ENCODE measurements at regions of chr1 and their contacts with region 1.

Region 1: DNA sequence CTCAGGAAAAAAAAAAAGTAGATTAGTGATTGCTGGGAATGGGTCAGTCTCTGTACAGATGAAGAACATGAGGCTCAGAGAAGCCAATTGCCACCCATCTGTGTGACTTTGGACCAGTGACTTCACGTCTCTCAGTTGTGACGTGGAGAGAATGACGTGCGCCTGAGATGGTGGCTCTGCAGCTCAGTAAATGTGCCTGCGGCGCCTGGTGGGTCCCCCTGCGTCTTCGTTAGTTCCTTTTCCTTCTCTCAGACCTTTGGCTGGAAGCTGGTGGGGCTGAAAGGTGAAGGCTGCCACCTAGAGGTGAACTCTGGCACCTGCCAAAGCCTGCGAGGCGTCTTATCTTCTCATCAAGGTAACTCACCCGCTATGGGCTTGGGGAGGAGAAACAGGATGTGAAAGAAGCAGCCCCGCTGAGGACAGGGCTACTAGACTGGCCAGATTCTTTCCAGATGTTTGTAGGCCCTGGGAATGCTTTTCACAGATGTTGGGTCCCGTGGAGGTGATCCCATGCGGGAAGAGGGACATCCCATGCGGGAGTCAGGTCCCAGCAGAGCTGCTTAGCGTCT is 8.7 kb upstream of the E2F2 start:
- DNase-seq: peak; percentile 83
- H3K4me3 ChIP-seq: no peak overlapping the region
- H3K27ac ChIP-seq: no peak overlapping the region
- H3K4me1 ChIP-seq: no peaks in the 10 kb centered on the region
- H3K27me3 ChIP-seq: no peaks in the 10 kb centered on the region
- CTCF ChIP-seq: peak; percentile 80 to 97 (median 88)
- POLR2A ChIP-seq: no peak

Region 2: GRCh38 chr1:23475134-23475628 is 64.6 kb before region 1 on chr1:
- intact Hi-C with region 1: no loop called
- DNase-seq: peak; percentile 59
- H3K4me3 ChIP-seq: no peak overlapping the region
- H3K27ac ChIP-seq: peak overlapping the region; percentile 41 to 47
- H3K4me1 ChIP-seq: peaks cover 14% of the 10 kb centered on the region
- H3K27me3 ChIP-seq: no peaks in the 10 kb centered on the region
- CTCF ChIP-seq: no peak
- POLR2A ChIP-seq: no peak

Region 3: GRCh38 chr1:23496490-23497181 is 43.1 kb before region 1 on chr1:
- intact Hi-C with region 1: loop called (anchors 2 kb)
- DNase-seq: no peak
- H3K4me3 ChIP-seq: no peak overlapping the region
- H3K27ac ChIP-seq: no peak overlapping the region
- H3K4me1 ChIP-seq: no peaks in the 10 kb centered on the region
- H3K27me3 ChIP-seq: no peaks in the 10 kb centered on the region
- CTCF ChIP-seq: no peak
- POLR2A ChIP-seq: no peak

Region 4: GRCh38 chr1:23634842-23635651 is 95.3 kb after region 1 on chr1:
- intact Hi-C with region 1: loop called (anchors 1 kb)
- DNase-seq: peak; percentile 33
- H3K4me3 ChIP-seq: peak overlapping the region; percentile 6 to 22
- H3K27ac ChIP-seq: peak overlapping the region; percentile 36 to 69
- H3K4me1 ChIP-seq: no peaks in the 10 kb centered on the region
- H3K27me3 ChIP-seq: no peaks in the 10 kb centered on the region
- CTCF ChIP-seq: peak; percentile 73 to 90 (median 80)
- POLR2A ChIP-seq: no peak

Measured in prostate gland (tissue), 2 donors.